Naive thymus-derived CD4-positive, alpha-beta T cell (primary cell): ENCODE measurements at regions of chr14 and their contacts with region 1.

Region 1: GRCh38 chr14:69818757-69819191 is 21.7 kb upstream of the SLC10A1 start:
- DNase-seq: peak; percentile 16 to 76 (median 53)
- ATAC-seq: peak; percentile 84
- H3K4me3 ChIP-seq: no peak overlapping the region
- H3K4me3 Mint-ChIP-seq: no peak overlapping the region
- H3K27ac ChIP-seq: no peak overlapping the region
- H3K27ac Mint-ChIP-seq: no peak overlapping the region
- H3K4me1 ChIP-seq: no peaks in the 10 kb centered on the region
- H3K4me1 Mint-ChIP-seq: peaks cover 0 to 4% (median 3%) of the 10 kb centered on the region in 7 donors
- H3K27me3 ChIP-seq: no peaks in the 10 kb centered on the region
- H3K27me3 Mint-ChIP-seq: peaks cover 0 to 8% (median 4%) of the 10 kb centered on the region in 5 donors

Region 2: GRCh38 chr14:69657950-69658355 is 160.8 kb before region 1 on chr14:
- CTCF ChIA-PET with region 1: no interaction called
- POLR2A ChIA-PET with region 1: no interaction called
- intact Hi-C with region 1: no loop called
- DNase-seq: no peak
- ATAC-seq: no peak
- H3K4me3 ChIP-seq: no peak overlapping the region
- H3K4me3 Mint-ChIP-seq: peak overlapping the region in 1 of 10 donors; percentile 28
- H3K27ac ChIP-seq: no peak overlapping the region
- H3K27ac Mint-ChIP-seq: peak overlapping the region in 5 of 9 donors; percentile 17 to 82 (median 68)
- H3K4me1 ChIP-seq: peaks cover 11 to 15% of the 10 kb centered on the region in 2 donors
- H3K4me1 Mint-ChIP-seq: peaks cover 66 to 94% (median 82%) of the 10 kb centered on the region in 7 donors
- H3K27me3 ChIP-seq: no peaks in the 10 kb centered on the region
- H3K27me3 Mint-ChIP-seq: no peaks in the 10 kb centered on the region

Region 3: DNA sequence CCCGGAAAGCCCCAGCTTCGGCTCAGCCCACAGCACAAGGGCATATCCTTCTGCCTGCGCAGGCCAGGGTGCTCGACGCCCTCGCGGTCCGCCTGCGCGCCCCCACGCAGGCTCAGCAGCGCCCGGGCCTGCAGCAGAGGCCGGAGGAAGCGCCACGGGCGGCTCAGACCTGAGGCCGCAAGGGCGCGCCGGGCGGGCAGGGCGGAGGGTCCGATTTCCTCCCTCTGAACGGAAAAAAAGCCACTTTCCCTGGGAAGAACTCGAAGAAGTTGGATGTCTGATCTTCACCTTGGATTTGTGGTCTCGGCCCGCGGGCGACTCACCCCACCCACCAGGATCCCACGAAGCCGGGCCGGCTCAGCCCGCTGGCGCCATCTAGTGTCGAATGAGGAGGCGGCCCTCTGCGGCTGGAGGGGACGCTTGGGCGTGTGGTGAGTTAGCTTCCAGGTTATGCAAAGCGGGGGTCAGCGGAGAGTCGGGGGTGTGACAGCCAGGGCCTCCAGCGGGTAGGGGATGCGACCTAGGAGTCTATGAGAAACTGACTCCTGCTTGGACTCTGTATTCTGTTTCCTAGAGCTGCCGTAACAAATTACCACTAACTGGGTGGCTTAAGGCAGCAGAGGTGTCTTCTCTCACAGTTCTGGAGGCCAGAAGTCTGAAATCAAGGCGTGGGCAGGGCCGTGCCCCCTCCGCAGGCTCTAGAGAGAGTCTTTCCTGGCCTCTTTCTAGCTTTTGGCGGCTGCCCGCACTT is 91.8 kb before region 1 on chr14:
- CTCF ChIA-PET with region 1: no interaction called
- POLR2A ChIA-PET with region 1: no interaction called
- intact Hi-C with region 1: loop called (anchors 1 to 10 kb)
- DNase-seq: peak; percentile 56 to 88 (median 77)
- ATAC-seq: peak; percentile 94
- H3K4me3 ChIP-seq: peak overlapping the region; percentile 72
- H3K4me3 Mint-ChIP-seq: peak overlapping the region; percentile 20 to 81 (median 58)
- H3K27ac ChIP-seq: peak overlapping the region; percentile 46
- H3K27ac Mint-ChIP-seq: peak overlapping the region in 6 of 9 donors; percentile 27 to 79 (median 57)
- H3K4me1 ChIP-seq: peaks cover 0 to 11% of the 10 kb centered on the region in 2 donors
- H3K4me1 Mint-ChIP-seq: peaks cover 0 to 36% (median 13%) of the 10 kb centered on the region in 7 donors
- H3K27me3 ChIP-seq: no peaks in the 10 kb centered on the region
- H3K27me3 Mint-ChIP-seq: peaks cover 0 to under 1% (median 0%) of the 10 kb centered on the region in 5 donors

Region 4: GRCh38 chr14:70073924-70074566 is 255.3 kb after region 1 on chr14:
- CTCF ChIA-PET with region 1: no interaction called
- POLR2A ChIA-PET with region 1: no interaction called
- intact Hi-C with region 1: loop called in 1 of 2 experiments (anchors 1 kb)
- DNase-seq: peak in 4 of 9 donors; percentile 3 to 35 (median 6)
- ATAC-seq: no peak
- H3K4me3 ChIP-seq: no peak overlapping the region
- H3K4me3 Mint-ChIP-seq: no peak overlapping the region
- H3K27ac ChIP-seq: no peak overlapping the region
- H3K27ac Mint-ChIP-seq: no peak overlapping the region
- H3K4me1 ChIP-seq: no peaks in the 10 kb centered on the region
- H3K4me1 Mint-ChIP-seq: no peaks in the 10 kb centered on the region
- H3K27me3 ChIP-seq: no peaks in the 10 kb centered on the region
- H3K27me3 Mint-ChIP-seq: peaks cover 23 to 44% (median 33%) of the 10 kb centered on the region in 5 donors

Region 5: GRCh38 chr14:70714055-70714621 is 895.4 kb after region 1 on chr14:
- CTCF ChIA-PET with region 1: no interaction called
- POLR2A ChIA-PET with region 1: no interaction called
- intact Hi-C with region 1: loop called in 1 of 2 experiments (anchors 10 kb)
- DNase-seq: peak in 7 of 9 donors; percentile 24 to 62 (median 43)
- ATAC-seq: no peak
- H3K4me3 ChIP-seq: no peak overlapping the region
- H3K4me3 Mint-ChIP-seq: peak overlapping the region in 2 of 10 donors; percentile 38 to 53
- H3K27ac ChIP-seq: no peak overlapping the region
- H3K27ac Mint-ChIP-seq: no peak overlapping the region
- H3K4me1 ChIP-seq: peaks cover 2 to 4% of the 10 kb centered on the region in 2 donors
- H3K4me1 Mint-ChIP-seq: peaks cover 3 to 7% (median 5%) of the 10 kb centered on the region in 7 donors
- H3K27me3 ChIP-seq: no peaks in the 10 kb centered on the region
- H3K27me3 Mint-ChIP-seq: peaks cover 0 to 9% (median 4%) of the 10 kb centered on the region in 5 donors